ENCODE measurements at regions of chr16 and their contacts with region 1.

Region 1: DNA sequence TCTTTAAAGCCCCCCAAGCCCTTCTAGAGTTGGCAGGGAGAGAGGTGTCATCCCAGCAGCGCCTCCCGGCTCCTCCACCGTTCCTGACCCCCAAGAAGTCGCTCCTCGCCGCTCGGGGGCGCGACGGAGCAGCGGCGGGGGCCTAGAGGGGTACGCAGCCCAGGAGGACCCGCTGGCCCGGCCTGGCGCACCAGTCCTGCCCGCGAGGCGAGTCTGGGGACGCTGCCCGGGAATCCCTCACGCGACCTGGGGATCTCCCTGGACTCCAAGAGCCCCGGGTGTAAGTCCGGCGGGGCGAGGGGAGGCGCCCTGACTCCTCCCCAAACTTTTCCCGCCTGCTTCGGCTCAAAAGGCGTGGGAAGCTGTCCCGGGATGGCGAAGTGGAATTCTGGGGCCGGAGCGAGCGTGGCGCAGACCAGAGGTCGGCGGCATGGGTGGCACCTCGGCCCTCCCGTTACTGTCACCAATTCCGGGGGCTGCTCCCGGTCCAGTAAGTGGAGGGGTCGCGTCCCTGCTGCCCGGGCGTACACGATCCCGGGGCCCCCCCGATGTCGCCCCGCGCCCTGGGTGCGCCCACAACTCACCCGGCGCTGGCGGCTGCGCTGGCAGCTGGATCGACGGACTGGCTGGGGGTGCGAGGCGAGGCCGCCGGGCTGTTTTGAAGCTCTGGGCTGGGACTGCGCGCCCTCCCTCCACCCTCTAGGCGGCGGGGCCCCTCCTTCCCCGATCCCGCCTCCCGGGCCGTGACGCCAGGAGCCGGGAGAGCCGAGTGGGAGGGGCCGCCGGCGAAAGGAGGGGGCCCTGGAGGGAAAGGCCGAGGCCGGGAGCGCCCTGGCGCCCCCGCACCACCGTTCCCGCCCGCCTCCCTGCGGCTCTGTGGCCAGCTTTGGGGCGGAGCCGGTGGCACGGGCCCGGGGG is at the start of gene EMP2:
- DNase-seq: peak; percentile 78 to 94
- H3K4me3 ChIP-seq: peak within 1 kb of the TSS; percentile 94 to 99
- H3K27ac ChIP-seq: peak within 1 kb of the TSS; percentile 97
- H3K4me1 ChIP-seq: peaks cover 0 to 52% (median 32%) of the 10 kb centered on the region in 4 donors
- H3K27me3 ChIP-seq: no peaks in the 10 kb centered on the region
- CTCF ChIP-seq: peak; percentile 52 to 66

Region 2: DNA sequence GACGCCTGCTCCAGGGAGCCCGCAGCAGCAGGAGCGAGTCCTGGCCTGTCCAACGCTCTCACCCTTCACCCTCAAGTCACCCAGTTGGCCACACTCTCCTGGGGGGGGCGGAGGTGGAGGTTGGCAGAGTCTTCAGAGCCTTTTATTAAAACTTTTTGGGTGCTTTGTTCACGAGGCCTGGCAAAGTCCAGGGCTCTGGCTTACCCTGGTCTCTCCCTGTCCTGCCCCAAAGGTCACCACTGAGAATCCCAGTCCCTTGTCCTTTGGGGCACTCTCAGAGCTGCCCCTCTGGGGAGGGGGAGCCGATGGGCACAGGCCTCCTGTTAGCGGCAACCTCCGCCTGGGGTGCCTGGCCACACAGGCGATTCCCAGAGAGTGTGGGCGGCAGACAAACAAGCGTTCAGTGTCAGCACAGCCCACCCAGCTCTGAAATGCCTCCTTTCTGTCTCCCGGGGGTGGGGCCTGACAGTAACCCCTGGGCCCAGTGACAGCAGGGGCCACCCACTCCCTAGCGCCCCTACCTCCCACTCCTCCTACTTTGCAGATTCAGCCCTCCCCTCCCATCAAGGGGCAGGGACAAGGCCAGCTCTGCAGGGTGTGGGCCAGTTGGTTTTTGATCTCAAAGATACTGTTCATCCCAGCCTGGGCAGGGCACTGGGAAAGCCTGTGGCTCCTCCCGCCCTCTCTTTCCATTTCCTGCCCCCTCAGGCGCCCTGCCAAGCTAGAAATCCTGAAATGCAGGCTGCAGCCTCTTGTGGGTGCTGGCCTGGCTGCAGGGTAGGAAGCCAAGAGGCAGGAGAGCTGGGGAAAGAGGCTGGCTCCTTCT is 36.7 kb after region 1 on chr16:
- intact Hi-C with region 1: no loop called
- DNase-seq: no peak
- H3K4me3 ChIP-seq: no peak overlapping the region
- H3K27ac ChIP-seq: no peak overlapping the region
- H3K4me1 ChIP-seq: peaks cover 0 to 32% (median 4%) of the 10 kb centered on the region in 4 donors
- H3K27me3 ChIP-seq: peaks cover 0 to 18% of the 10 kb centered on the region in 2 donors
- CTCF ChIP-seq: no peak

Region 3: DNA sequence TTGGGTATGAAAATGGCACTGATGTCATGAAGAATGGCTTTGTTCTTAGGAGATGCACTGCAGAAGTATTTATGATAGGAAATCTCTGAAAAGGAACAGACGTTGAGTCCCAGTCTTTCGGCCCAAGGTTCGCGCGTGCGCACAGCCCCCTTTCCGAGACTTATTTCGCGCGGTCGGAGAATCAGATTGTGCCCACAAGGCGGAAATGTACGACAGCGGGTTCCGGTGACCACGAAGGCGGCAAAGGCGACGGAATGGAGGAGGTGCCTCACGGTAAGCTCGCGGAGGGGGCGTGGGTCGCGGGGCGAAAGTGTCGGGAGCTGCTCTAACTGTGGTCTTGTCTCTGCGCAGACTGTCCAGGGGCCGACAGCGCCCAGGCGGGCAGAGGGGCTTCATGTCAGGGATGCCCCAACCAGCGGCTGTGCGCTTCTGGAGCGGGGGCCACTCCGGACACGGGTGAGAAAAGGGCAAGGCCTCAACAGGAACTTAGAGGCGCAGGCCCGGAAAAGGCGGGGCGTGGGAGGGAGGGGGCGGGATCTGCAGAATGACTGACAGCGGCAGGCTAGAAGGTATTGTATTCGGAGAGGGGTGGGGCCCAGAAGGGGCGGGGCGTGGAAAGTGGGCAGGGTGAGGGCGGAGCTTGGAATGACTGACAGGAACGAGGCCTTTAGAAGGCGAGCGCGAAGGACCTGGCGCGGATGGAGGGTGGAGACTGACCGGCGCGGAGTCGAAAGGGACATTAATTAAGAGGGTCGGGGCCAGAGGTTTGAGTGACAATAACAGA is 163.6 kb after region 1 on chr16 and contains the start of gene NUBP1:
- intact Hi-C with region 1: loop called (anchors 1 kb)
- DNase-seq: peak; percentile 100
- H3K4me3 ChIP-seq: peak within 1 kb of the TSS; percentile 58 to 67
- H3K27ac ChIP-seq: peak within 1 kb of the TSS; percentile 90 to 97
- H3K4me1 ChIP-seq: peaks cover 0 to 41% (median 9%) of the 10 kb centered on the region in 4 donors
- H3K27me3 ChIP-seq: no peaks in the 10 kb centered on the region
- CTCF ChIP-seq: peak in 1 of 2 experiments; percentile 19

Measured in tibial artery (tissue), 4 donors.